Common myeloid progenitor, CD34-positive (primary cell): ENCODE measurements at regions of chr20 and their contacts with region 1.

Region 1: GRCh38 chr20:63381807-63382322 is 20.7 kb upstream of the CHRNA4 start:
- DNase-seq: peak in 1 of 3 donors; percentile 14
- H3K4me3 ChIP-seq: no peak overlapping the region
- H3K27ac ChIP-seq: no peak overlapping the region
- H3K4me1 ChIP-seq: peaks cover 0 to 3% (median 0%) of the 10 kb centered on the region in 4 experiments
- H3K27me3 ChIP-seq: peaks cover 0 to 58% (median 19%) of the 10 kb centered on the region in 5 experiments

Region 2: GRCh38 chr20:63295422-63295821 is 86.4 kb before region 1 on chr20:
- CTCF ChIA-PET with region 1: no interaction called
- POLR2A ChIA-PET with region 1: no interaction called
- DNase-seq: no peak
- H3K4me3 ChIP-seq: no peak overlapping the region
- H3K27ac ChIP-seq: no peak overlapping the region
- H3K4me1 ChIP-seq: peaks cover 0 to 1% (median 0%) of the 10 kb centered on the region in 4 experiments
- H3K27me3 ChIP-seq: peaks cover 0 to 67% (median 11%) of the 10 kb centered on the region in 5 experiments

Region 3: DNA sequence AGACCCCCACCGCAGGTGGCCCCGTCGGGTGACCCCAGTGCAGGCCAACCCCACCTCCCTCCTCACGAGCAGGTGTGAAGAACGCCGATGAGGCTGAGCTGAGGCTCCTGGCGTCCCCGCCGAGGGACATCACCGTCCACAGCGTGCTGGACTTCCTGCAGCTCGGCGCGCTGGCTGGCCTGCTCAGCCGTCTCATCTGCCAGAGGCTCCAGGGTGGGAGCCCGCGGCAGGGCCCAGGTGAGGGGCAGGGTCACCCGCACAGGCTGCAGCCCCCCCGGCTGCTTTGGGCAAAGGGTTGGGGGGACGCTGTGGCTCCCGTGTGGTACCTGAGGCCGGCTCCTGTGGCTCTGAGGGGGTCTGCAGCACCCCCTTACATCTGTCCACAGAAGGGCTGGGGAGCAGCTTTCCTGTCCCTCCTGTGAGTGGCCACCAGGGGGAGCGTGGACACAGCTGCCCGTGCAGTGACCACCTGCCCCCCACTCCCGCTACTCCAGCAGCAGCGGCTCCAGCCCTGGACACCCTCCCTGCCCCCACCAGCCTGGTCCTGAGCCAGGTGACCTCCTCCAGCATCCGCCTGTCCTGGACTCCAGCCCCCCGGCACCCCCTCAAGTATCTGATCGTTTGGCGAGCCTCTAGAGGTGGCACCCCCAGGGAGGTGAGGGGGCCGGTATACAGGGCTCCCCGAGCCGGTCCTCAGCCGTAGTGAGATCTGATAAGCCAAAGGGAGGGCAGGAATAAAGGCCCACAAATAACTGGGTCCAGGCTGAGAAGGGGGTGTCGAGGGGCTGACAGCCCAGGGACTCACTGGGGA is 72.4 kb before region 1 on chr20:
- CTCF ChIA-PET with region 1: interaction called, 55 read pairs
- POLR2A ChIA-PET with region 1: interaction called, 5 read pairs
- DNase-seq: peak; percentile 19 to 46 (median 44)
- H3K4me3 ChIP-seq: no peak overlapping the region
- H3K27ac ChIP-seq: no peak overlapping the region
- H3K4me1 ChIP-seq: no peaks in the 10 kb centered on the region
- H3K27me3 ChIP-seq: peaks cover 0 to 15% (median 3%) of the 10 kb centered on the region in 5 experiments

Region 4: GRCh38 chr20:63409459-63410435 is 27.9 kb after region 1 on chr20:
- CTCF ChIA-PET with region 1: no interaction called
- POLR2A ChIA-PET with region 1: no interaction called
- DNase-seq: no peak
- H3K4me3 ChIP-seq: no peak overlapping the region
- H3K27ac ChIP-seq: no peak overlapping the region
- H3K4me1 ChIP-seq: peaks cover 0 to 16% (median 7%) of the 10 kb centered on the region in 4 experiments
- H3K27me3 ChIP-seq: peaks cover 0 to 4% (median 0%) of the 10 kb centered on the region in 5 experiments